Aorta (tissue), 5 donors: ENCODE measurements at regions of chr9 and their contacts with region 1.

Region 1: DNA sequence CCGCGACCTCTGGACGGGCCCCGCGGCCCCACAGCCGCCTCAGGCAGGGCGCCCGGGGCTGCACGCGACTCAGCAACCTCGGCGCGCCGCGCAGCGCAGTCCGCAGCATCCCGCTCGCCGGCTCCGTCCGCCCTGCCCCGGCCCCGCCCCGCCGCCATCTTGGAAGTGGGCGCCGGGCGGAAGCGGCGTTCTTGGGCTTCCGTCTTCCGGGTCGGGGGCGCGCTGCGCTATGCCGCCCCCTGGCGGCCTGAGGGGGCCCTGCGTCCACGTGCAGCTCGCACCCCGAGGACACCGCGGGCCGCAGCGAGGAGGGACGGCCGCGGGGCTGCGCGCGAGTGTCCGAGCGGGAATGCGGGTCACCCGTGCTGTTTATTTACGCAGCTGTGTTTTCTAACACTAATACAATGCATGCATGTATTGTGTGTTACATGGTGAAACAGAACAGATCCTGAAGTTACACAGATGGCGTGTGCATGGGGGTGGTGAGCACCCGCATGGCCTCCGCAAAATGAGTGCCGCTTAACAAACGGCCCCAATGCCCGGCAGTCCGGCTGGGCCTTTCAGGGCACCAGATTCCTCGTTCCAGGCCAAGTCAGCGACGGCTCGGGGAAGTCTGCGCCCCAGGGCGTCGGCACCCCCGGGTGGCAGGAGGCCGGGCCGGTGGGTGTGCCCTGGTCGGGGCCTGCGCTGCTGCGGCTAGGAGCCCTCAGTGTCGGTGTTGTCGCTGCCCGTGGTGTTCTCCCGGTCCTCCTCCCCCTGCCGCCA is at the start of gene DNLZ:
- DNase-seq: peak; percentile 88 to 94
- ATAC-seq: peak; percentile 86
- H3K4me3 ChIP-seq: peak within 1 kb of the TSS; percentile 83 to 88
- H3K27ac ChIP-seq: peak within 1 kb of the TSS; percentile 2 to 68
- H3K4me1 ChIP-seq: no peaks in the 10 kb centered on the region
- H3K27me3 ChIP-seq: no peaks in the 10 kb centered on the region
- total RNA-seq, gene DNLZ: 15.5 to 18.1 TPM

Region 2: GRCh38 chr9:136312436-136312835 is 51.4 kb before region 1 on chr9:
- intact Hi-C with region 1: loop called in 1 of 2 experiments (anchors 5 kb)
- DNase-seq: no peak
- ATAC-seq: peak; percentile 55
- H3K4me3 ChIP-seq: no peak overlapping the region
- H3K27ac ChIP-seq: no peak overlapping the region
- H3K4me1 ChIP-seq: no peaks in the 10 kb centered on the region
- H3K27me3 ChIP-seq: no peaks in the 10 kb centered on the region

Region 3: GRCh38 chr9:136327313-136327974 is 36.3 kb before region 1 on chr9 and contains the start of gene GPSM1:
- intact Hi-C with region 1: loop called in 1 of 2 experiments (anchors 5 kb)
- DNase-seq: peak in 1 of 2 donors; percentile 89
- ATAC-seq: peak; percentile 44
- H3K4me3 ChIP-seq: peak within 1 kb of the TSS; percentile 36 to 48
- H3K27ac ChIP-seq: peak within 1 kb of the TSS in 1 of 2 donors; percentile 2
- H3K4me1 ChIP-seq: no peaks in the 10 kb centered on the region
- H3K27me3 ChIP-seq: no peaks in the 10 kb centered on the region
- total RNA-seq, gene GPSM1: 22.7 to 28.9 TPM

Region 4: GRCh38 chr9:136345281-136346156 is 18.3 kb before region 1 on chr9:
- intact Hi-C with region 1: loop called in 1 of 2 experiments (anchors 1 kb)
- DNase-seq: peak; percentile 85 to 90
- ATAC-seq: peak; percentile 81
- H3K4me3 ChIP-seq: peak overlapping the region in 1 of 2 donors; percentile 1
- H3K27ac ChIP-seq: peak overlapping the region in 1 of 2 donors; percentile 14
- H3K4me1 ChIP-seq: no peaks in the 10 kb centered on the region
- H3K27me3 ChIP-seq: no peaks in the 10 kb centered on the region